ENCODE measurements at regions of chr15 and their contacts with region 1.

Region 1: DNA sequence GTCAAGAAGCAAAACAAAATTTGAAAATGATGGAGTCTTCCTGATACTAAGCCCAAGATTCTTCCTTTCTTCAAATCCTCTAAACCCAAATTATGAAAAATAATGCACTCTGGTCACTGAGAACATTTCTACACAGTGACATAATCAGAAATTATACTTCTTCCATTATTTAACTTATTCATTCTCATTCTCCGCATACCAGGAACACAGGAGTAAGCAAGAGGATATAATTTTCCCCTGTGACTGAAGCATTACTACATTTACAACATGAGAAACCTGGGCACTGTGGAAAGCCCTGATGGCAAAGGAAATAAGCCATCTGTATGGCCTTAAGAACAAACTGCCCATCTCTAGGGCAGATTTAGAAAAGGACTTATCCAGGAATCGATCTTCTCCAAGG is 47.0 kb downstream of the EXD1 start:
- DNase-seq: no peak
- H3K4me3 ChIP-seq: no peak overlapping the region
- CTCF ChIP-seq: no peak

Region 2: GRCh38 chr15:41031232-41032078 is 152.1 kb before region 1 on chr15:
- CTCF ChIA-PET with region 1: interaction called, 51 read pairs
- POLR2A ChIA-PET with region 1: no interaction called
- DNase-seq: no peak
- H3K4me3 ChIP-seq: no peak overlapping the region
- CTCF ChIP-seq: no peak

Region 3: DNA sequence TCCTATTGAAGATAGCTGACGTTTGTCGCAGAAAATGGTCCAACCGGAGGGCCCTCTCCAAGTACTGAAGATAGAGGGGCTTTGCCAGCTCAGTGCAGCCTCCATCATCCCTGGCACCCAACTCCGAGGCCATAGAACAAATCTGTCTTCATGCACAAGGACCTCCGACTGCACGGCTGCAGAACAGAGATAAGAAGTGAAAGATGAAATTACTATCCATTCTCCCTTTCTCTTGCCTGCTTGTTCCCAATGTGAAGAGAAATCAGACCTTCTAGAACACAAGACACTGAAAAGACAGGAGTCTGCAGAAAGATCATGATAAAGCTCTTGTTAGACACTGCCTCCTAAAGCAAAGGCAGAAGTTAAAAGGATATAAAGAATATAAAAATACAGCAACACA is 87.4 kb before region 1 on chr15:
- CTCF ChIA-PET with region 1: interaction called, 11 read pairs
- POLR2A ChIA-PET with region 1: no interaction called
- DNase-seq: no peak
- H3K4me3 ChIP-seq: no peak overlapping the region
- CTCF ChIP-seq: no peak

Region 4: GRCh38 chr15:41148065-41148464 is 35.5 kb before region 1 on chr15:
- CTCF ChIA-PET with region 1: no interaction called
- POLR2A ChIA-PET with region 1: no interaction called
- DNase-seq: no peak
- H3K4me3 ChIP-seq: no peak overlapping the region
- CTCF ChIP-seq: no peak